Mammary epithelial cell (primary cell): ENCODE measurements at regions of chr14 and their contacts with region 1.

Region 1: DNA sequence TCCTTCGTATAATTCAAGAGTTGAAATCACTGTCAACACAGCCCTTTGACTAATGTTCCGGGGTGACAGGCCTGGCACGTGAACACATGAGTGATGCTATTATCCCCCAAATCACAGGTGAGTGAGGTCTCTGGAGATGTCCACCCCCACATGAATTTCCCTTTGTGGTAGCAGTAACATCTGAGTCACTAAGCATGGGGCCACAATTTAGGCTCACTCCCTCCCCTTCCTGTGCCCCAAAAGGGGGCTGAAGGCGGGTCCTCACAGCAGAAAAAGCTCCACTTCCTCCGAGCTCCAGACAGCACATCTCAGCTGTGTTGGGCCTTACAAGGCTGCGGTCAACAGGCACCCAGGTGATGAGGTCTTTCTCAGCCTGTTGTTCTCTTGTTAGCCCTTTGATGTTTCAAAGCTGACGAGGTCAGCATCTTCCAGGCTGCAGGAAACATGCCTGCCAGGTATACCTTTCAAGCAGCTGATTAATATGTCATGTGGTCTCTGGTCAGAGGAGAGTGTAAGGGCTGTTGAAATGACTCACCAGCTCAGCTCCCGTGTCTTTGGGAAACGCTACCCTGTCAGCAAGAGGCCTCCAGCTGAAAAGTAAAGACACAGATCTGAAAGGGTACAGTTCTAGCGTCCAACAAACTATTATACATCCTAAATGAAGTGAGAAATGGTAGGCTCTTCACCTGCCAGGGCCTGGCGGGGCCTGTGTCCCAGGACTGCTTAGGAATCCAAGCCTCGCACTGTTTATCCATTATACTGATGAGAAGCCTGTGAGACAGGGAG is 107.3 kb downstream of the ZFP36L1 start:
- DNase-seq: peak; percentile 99
- H3K4me3 ChIP-seq: no peak overlapping the region
- H3K27ac ChIP-seq: peak overlapping the region; percentile 96
- H3K4me1 ChIP-seq: peaks cover 77% of the 10 kb centered on the region
- H3K27me3 ChIP-seq: no peaks in the 10 kb centered on the region
- CTCF ChIP-seq: no peak

Region 2: DNA sequence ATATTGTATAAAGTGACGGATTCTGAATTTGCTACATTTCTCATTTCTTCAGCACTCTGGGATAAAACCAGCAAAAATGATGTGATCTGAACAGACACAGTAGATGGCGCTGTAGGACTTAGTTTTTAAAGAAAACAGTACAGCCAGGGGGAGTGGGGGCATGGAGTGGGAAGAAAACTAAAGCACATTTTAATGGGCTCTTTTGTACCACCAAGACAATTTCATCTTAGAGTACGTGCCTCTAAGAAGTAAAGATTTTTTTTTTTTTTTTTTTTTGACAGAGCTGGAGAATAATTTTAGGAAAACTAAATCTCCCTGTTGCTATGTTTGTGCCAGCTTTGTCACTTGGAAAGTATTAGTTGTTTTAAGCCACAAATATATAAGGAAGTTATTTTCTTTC is 741.7 kb before region 1 on chr14:
- CTCF ChIA-PET with region 1: no interaction called
- dilution Hi-C with region 1: no loop called
- in situ Hi-C with region 1: no loop called
- intact Hi-C with region 1: loop called (anchors 10 kb)
- DNase-seq: peak; percentile 61
- H3K4me3 ChIP-seq: no peak overlapping the region
- H3K27ac ChIP-seq: no peak overlapping the region
- H3K4me1 ChIP-seq: peaks cover 17% of the 10 kb centered on the region
- H3K27me3 ChIP-seq: no peaks in the 10 kb centered on the region
- CTCF ChIP-seq: peak; percentile 63 to 76

Region 3: DNA sequence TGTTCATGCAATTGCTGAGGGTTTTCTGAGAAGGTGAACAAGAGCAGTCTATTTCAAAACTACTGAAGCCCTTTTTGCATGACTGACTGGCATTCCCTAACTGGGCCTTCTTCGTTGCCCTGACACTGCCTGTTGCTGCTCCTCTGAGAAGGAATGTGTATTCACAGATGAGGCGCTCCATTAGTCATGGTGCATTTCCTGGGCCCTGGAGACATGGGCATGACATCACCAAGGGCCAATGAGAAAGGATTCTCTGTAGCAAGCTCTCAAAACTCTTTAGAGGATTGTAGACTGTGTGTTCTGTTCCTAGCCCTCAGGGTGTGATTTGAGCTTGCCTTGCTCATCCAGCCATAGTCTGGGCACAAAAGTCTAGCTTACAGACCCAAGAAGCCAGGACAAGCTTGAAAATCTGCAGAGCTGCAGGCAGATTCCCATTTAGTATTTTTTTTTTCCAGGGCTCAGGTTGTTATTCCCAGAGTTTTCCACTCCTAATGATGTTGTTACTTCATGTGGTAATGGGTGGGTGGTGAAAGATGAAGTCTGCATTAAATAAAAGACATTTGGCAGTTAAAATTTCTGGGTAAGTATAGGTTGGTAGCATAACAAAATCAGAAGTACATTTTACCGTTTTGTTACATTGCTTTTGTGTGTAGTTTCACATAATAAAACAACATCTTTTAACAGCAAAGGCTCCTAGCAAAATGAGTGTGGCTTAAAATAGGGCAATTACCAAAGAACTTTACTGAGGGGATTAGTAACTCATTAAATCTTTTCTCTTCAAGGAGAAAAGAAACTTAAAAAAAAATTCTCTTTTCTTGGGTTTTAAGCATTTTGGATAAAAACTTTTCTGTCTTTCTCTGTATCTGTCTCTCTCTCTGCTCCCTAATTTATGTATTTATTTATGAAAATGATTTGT is 547.6 kb before region 1 on chr14:
- CTCF ChIA-PET with region 1: no interaction called
- dilution Hi-C with region 1: no loop called
- in situ Hi-C with region 1: no loop called
- intact Hi-C with region 1: loop called (anchors 5 kb)
- DNase-seq: peak; percentile 99
- H3K4me3 ChIP-seq: no peak overlapping the region
- H3K27ac ChIP-seq: peak overlapping the region; percentile 99
- H3K4me1 ChIP-seq: peaks cover 63% of the 10 kb centered on the region
- H3K27me3 ChIP-seq: no peaks in the 10 kb centered on the region
- CTCF ChIP-seq: no peak

Region 4: GRCh38 chr14:68377459-68377858 is 308.2 kb before region 1 on chr14:
- CTCF ChIA-PET with region 1: no interaction called
- dilution Hi-C with region 1: no loop called
- in situ Hi-C with region 1: no loop called
- intact Hi-C with region 1: loop called (anchors 10 kb)
- DNase-seq: peak; percentile 73
- H3K4me3 ChIP-seq: no peak overlapping the region
- H3K27ac ChIP-seq: peak overlapping the region; percentile 70
- H3K4me1 ChIP-seq: peaks cover 21% of the 10 kb centered on the region
- H3K27me3 ChIP-seq: no peaks in the 10 kb centered on the region
- CTCF ChIP-seq: no peak

Region 5: GRCh38 chr14:68401855-68402254 is 283.8 kb before region 1 on chr14:
- CTCF ChIA-PET with region 1: no interaction called
- dilution Hi-C with region 1: no loop called
- in situ Hi-C with region 1: loop called in 1 of 2 experiments (anchors 10 kb)
- intact Hi-C with region 1: loop called (anchors 5 kb)
- DNase-seq: no peak
- H3K4me3 ChIP-seq: no peak overlapping the region
- H3K27ac ChIP-seq: peak overlapping the region; percentile 83
- H3K4me1 ChIP-seq: peaks cover 77% of the 10 kb centered on the region
- H3K27me3 ChIP-seq: no peaks in the 10 kb centered on the region
- CTCF ChIP-seq: no peak

Region 6: GRCh38 chr14:68408680-68409079 is 276.9 kb before region 1 on chr14:
- CTCF ChIA-PET with region 1: no interaction called
- dilution Hi-C with region 1: no loop called
- in situ Hi-C with region 1: loop called in 1 of 2 experiments (anchors 10 kb)
- intact Hi-C with region 1: loop called (anchors 5 kb)
- DNase-seq: no peak
- H3K4me3 ChIP-seq: no peak overlapping the region
- H3K27ac ChIP-seq: no peak overlapping the region
- H3K4me1 ChIP-seq: peaks cover 44% of the 10 kb centered on the region
- H3K27me3 ChIP-seq: no peaks in the 10 kb centered on the region
- CTCF ChIP-seq: no peak

Region 7: GRCh38 chr14:68577827-68578541 is 107.6 kb before region 1 on chr14:
- CTCF ChIA-PET with region 1: no interaction called
- dilution Hi-C with region 1: no loop called
- in situ Hi-C with region 1: no loop called
- intact Hi-C with region 1: loop called (anchors 2 kb)
- DNase-seq: peak; percentile 96
- H3K4me3 ChIP-seq: no peak overlapping the region
- H3K27ac ChIP-seq: peak overlapping the region; percentile 82
- H3K4me1 ChIP-seq: peaks cover 40% of the 10 kb centered on the region
- H3K27me3 ChIP-seq: no peaks in the 10 kb centered on the region
- CTCF ChIP-seq: no peak

Region 8: DNA sequence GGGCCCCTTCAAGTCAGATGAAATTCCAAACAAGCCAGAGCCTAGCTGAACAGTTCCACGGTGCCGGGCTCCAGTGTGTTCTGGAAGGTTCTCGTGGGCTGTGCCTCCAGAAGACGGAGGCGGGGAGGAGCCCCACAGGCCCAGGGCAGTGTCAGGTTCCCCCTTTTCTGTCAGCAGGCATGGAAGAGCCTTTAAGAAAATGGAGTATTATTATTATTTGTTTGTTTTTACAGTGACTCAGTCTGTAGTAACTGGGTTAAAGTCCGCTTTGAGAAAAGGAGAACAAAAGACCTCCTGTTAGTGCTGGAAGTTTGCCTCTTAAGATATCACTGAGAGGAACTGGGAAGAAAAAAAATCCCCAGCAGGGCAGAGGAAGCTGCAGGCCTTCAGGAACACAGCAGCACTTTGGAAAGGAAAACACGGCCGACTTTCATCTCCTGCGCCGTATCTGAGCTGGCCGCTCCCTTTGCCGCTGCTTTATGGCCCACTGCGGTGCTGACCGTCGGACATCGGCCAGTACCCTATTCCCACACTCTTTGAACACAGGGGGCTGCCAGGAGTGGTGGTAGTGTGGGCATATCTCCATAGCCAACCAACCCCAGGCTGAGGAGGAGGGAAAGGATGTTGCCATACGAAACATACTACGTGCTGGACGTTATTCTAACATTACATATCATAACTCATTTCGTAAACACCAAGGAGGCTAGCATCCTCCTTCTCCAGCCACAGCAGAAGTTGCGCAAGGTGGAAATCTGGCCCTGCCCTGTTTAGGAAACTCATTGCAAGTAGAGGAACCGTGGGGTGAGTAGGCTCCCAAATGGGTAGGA is 86.8 kb before region 1 on chr14:
- CTCF ChIA-PET with region 1: no interaction called
- dilution Hi-C with region 1: no loop called
- in situ Hi-C with region 1: no loop called
- intact Hi-C with region 1: no loop called
- DNase-seq: peak; percentile 94
- H3K4me3 ChIP-seq: peak overlapping the region in 1 of 3 experiments; percentile 2
- H3K27ac ChIP-seq: peak overlapping the region; percentile 85
- H3K4me1 ChIP-seq: peaks cover 27% of the 10 kb centered on the region
- H3K27me3 ChIP-seq: no peaks in the 10 kb centered on the region
- CTCF ChIP-seq: no peak